ENCODE measurements at regions of chr12 and their contacts with region 1.

Region 1: DNA sequence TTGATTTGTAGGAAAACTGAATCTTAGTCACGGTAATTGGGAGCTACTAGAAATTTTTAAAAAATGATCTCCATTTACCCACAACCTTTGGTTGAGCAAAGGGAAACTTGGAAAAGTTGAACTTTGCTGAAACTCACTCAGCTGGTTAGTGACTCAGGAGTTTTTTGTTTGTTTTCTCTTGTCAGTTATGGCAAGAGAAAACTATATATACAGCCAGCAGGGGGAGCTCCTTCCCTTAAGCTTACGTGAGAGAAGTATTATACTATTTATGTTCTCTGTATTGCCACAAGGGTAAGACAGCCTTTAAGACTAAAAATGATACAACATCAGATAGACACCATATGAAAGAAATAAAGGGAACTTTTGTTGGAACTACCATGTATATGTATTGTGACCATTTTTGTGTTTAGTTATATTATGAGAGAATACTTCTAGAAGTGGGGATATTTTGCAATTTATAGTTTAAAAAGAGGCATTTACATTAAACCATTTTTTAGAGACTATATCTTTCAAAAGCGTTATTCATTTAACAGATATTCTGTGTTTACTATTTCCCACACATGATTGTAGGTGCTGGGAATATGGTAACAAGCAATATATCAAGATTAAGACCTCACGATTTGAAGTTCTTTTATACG is 28.1 kb upstream of the TBC1D30 start:
- DNase-seq: peak in 8 of 9 experiments; percentile 30 to 83 (median 60)
- ATAC-seq: peak; percentile 86
- H3K4me3 ChIP-seq: no peak overlapping the region
- H3K4me3 Mint-ChIP-seq: no peak overlapping the region
- H3K27ac ChIP-seq: no peak overlapping the region
- H3K27ac Mint-ChIP-seq: no peak overlapping the region
- H3K4me1 ChIP-seq: no peaks in the 10 kb centered on the region
- H3K4me1 Mint-ChIP-seq: no peaks in the 10 kb centered on the region
- H3K27me3 ChIP-seq: peaks cover 0 to 3% of the 10 kb centered on the region in 2 experiments
- H3K27me3 Mint-ChIP-seq: peaks cover 16% of the 10 kb centered on the region
- CTCF ChIP-seq: peak; percentile 94

Region 2: GRCh38 chr12:64780531-64781279 is 15.6 kb before region 1 on chr12:
- CTCF ChIA-PET with region 1: interaction called, 11 read pairs
- POLR2A ChIA-PET with region 1: interaction called, 6 read pairs
- intact Hi-C with region 1: no loop called
- DNase-seq: peak in 4 of 9 experiments; percentile 14 to 53 (median 30)
- ATAC-seq: peak; percentile 51
- H3K4me3 ChIP-seq: peak overlapping the region; percentile 31 to 48
- H3K4me3 Mint-ChIP-seq: peak overlapping the region; percentile 86
- H3K27ac ChIP-seq: no peak overlapping the region
- H3K27ac Mint-ChIP-seq: no peak overlapping the region
- H3K4me1 ChIP-seq: peaks cover 13% of the 10 kb centered on the region
- H3K4me1 Mint-ChIP-seq: peaks cover 18% of the 10 kb centered on the region
- H3K27me3 ChIP-seq: peaks cover 15 to 31% of the 10 kb centered on the region in 2 experiments
- H3K27me3 Mint-ChIP-seq: peaks cover 53% of the 10 kb centered on the region
- CTCF ChIP-seq: no peak

Region 3: GRCh38 chr12:64806593-64807460 is 10.5 kb after region 1 on chr12:
- CTCF ChIA-PET with region 1: interaction called, 12 read pairs
- POLR2A ChIA-PET with region 1: interaction called, 4 read pairs
- intact Hi-C with region 1: no loop called
- DNase-seq: no peak
- ATAC-seq: no peak
- H3K4me3 ChIP-seq: no peak overlapping the region
- H3K4me3 Mint-ChIP-seq: no peak overlapping the region
- H3K27ac ChIP-seq: no peak overlapping the region
- H3K27ac Mint-ChIP-seq: no peak overlapping the region
- H3K4me1 ChIP-seq: no peaks in the 10 kb centered on the region
- H3K4me1 Mint-ChIP-seq: peaks cover 5% of the 10 kb centered on the region
- H3K27me3 ChIP-seq: peaks cover 0 to 2% of the 10 kb centered on the region in 2 experiments
- H3K27me3 Mint-ChIP-seq: peaks cover 49% of the 10 kb centered on the region
- CTCF ChIP-seq: no peak

Region 4: GRCh38 chr12:65232476-65233077 is 436.2 kb after region 1 on chr12:
- CTCF ChIA-PET with region 1: no interaction called
- POLR2A ChIA-PET with region 1: no interaction called
- intact Hi-C with region 1: loop called in 1 of 2 experiments (anchors 5 kb)
- DNase-seq: peak in 2 of 9 experiments; percentile 28 to 53
- ATAC-seq: peak; percentile 40
- H3K4me3 ChIP-seq: no peak overlapping the region
- H3K4me3 Mint-ChIP-seq: peak overlapping the region; percentile 40
- H3K27ac ChIP-seq: no peak overlapping the region
- H3K27ac Mint-ChIP-seq: no peak overlapping the region
- H3K4me1 ChIP-seq: peaks cover 4% of the 10 kb centered on the region
- H3K4me1 Mint-ChIP-seq: peaks cover 13% of the 10 kb centered on the region
- H3K27me3 ChIP-seq: no peaks in the 10 kb centered on the region
- H3K27me3 Mint-ChIP-seq: no peaks in the 10 kb centered on the region
- CTCF ChIP-seq: peak; percentile 69

Measured in CD8-positive, alpha-beta T cell (primary cell).